RWPE1 (cell line): ENCODE measurements at regions of chr10 and their contacts with region 1.

Region 1: GRCh38 chr10:102796407-102797176 is 40.6 kb downstream of the CYP17A1 start:
- DNase-seq: no peak
- H3K27ac ChIP-seq: peak overlapping the region; percentile 57
- CTCF ChIP-seq: no peak

Region 2: DNA sequence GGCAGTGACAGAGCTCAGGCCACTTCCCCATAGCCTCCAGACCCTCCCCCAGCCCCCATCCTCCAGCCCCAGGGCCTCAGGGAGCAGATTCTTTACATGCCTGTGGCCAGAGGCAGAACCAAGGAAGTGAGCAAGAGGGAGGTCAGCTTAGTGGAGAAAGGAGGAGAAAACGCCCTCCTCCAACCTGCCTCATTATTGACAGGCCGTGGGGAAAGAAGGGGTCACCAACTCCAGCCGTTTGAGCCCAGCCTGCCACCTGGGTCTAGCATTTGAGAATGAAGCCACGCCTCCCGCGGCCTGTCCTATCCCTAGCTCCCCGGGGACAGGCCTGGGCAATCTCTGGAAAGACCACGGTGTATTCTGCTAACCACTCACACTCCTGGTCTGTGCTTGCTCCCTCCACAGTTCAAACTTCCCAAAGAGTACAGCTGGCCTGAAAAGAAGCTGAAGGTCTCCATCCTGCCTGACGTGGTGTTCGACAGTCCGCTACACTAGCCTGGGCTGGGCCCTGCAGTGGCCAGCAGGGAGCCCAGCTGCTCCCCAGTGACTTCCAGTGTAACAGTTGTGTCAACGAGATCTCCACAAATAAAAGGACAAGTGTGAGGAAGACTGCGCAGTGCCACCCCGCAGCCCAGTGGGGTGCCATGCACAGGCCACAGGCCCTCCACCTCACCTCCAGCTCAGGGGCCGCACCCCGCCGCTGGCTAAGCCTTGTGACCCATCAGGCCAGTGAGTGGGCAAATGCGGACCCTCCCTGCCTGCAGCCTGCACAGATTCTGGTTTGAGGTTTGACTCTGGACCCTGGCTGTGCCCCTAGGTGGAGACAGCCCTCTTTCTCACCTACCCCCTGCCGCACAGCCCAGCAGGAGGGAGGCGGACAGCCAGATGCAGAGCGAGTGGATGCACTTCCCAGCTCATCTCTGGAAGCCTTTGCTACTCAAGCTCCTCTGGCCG is 166.7 kb before region 1 on chr10:
- CTCF ChIA-PET with region 1: no interaction called
- POLR2A ChIA-PET with region 1: no interaction called
- DNase-seq: peak; percentile 79
- H3K27ac ChIP-seq: peak overlapping the region; percentile 78
- CTCF ChIP-seq: no peak

Region 3: GRCh38 chr10:102776779-102777456 is 19.7 kb before region 1 on chr10:
- CTCF ChIA-PET with region 1: no interaction called
- POLR2A ChIA-PET with region 1: interaction called, 14 read pairs
- DNase-seq: peak; percentile 97
- H3K27ac ChIP-seq: peak overlapping the region; percentile 99
- CTCF ChIP-seq: no peak